ENCODE measurements at regions of chr7 and their contacts with region 1.

Region 1: GRCh38 chr7:126016722-126017121 is 1087.1 kb upstream of the POT1 start:
- DNase-seq: no peak
- H3K4me3 ChIP-seq: no peak overlapping the region
- H3K27ac ChIP-seq: no peak overlapping the region
- H3K4me1 ChIP-seq: no peaks in the 10 kb centered on the region
- H3K27me3 ChIP-seq: no peaks in the 10 kb centered on the region
- CTCF ChIP-seq: no peak

Region 2: DNA sequence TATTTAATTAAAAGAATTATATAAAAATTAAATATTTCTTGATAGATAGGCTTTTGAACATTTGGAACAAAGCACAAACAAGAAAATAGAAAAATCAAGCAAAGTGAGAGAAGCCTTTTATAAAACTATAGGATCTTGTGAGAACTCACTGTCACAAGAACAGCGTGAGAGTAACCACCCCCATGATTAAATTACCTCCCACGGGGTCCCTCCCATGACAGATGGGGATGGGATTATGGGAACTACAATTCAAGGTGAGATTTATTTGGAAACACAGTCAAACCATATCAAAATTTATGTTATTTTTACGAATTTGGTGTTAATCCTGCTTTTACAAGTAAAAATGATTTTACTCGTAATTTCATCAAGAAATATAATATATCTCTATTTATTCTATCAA is 49.0 kb after region 1 on chr7:
- intact Hi-C with region 1: loop called (anchors 5 kb)
- DNase-seq: no peak
- H3K4me3 ChIP-seq: no peak overlapping the region
- H3K27ac ChIP-seq: no peak overlapping the region
- H3K4me1 ChIP-seq: no peaks in the 10 kb centered on the region
- H3K27me3 ChIP-seq: no peaks in the 10 kb centered on the region
- CTCF ChIP-seq: no peak